ENCODE measurements at regions of chr5 and their contacts with region 1.

Region 1: DNA sequence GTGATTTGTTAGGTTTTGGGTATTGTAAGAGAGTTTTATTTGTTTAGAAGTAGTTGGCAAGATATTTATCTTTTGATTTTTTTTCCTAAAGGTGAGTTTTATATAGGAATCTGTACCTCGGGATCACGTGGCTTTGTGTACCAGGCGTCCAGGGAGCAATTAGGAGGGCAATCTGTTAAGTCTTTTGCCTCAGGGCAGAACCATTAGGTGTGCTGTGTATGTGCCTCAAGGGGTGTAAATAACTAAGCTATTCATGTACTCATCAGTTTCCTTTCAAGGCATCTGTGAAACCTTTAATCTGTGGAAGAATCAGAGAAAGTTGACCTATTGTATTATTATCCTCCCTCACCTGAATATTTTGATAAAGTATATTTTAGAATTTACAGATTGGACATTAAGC is 39.5 kb downstream of the ZSWIM6 start:
- DNase-seq: no peak
- H3K4me3 ChIP-seq: no peak overlapping the region
- H3K27ac ChIP-seq: peak overlapping the region in 1 of 4 donors; percentile 13
- H3K4me1 ChIP-seq: peaks cover 0 to 38% (median 19%) of the 10 kb centered on the region in 4 donors
- H3K27me3 ChIP-seq: no peaks in the 10 kb centered on the region
- CTCF ChIP-seq: no peak
- EP300 ChIP-seq: no peak
- POLR2A ChIP-seq: no peak

Region 2: GRCh38 chr5:61357745-61358144 is 13.8 kb before region 1 on chr5:
- in situ Hi-C with region 1: no loop called
- intact Hi-C with region 1: loop called (anchors 1 kb)
- DNase-seq: no peak
- H3K4me3 ChIP-seq: no peak overlapping the region
- H3K27ac ChIP-seq: no peak overlapping the region
- H3K4me1 ChIP-seq: peaks cover 0 to 27% (median 5%) of the 10 kb centered on the region in 4 donors
- H3K27me3 ChIP-seq: no peaks in the 10 kb centered on the region
- CTCF ChIP-seq: peak in 4 of 5 experiments; percentile 14 to 33 (median 22)
- EP300 ChIP-seq: no peak
- POLR2A ChIP-seq: no peak

Measured in transverse colon (tissue), 4 donors.